BJ (cell line): ENCODE measurements at regions of chr18 and their contacts with region 1.

Region 1: DNA sequence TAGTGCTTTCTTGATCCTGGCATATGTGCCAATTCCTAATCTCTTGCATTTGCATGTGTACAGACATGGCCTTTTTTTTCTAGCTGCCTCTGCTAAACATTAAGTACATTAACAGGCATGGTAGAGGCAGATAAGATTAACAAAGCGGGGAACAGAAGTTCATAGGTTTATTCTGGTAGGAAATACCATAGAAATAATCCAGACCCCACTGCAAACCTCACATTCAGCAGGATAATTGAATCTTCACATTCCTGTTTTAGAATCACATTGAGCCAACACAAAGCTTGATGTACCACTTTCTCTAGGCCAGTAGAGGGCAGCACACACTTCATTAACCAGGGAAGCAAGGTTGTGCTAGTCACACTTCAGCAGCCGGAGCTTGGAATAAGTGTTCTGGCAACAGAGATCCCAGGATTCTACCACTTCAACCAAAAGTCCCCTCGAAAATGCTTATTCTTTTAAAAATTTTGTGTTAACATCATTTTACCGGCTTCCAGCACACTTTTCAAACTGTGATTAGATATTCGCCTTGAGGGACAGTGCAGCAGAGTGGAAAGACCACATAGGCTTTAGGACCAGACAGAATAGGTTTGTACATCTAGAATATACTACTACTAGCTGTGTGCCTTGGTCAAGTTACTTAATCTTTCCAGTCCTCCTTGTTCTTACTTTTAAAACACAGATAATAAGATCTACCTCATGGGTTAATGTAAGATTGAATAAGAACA is 420.2 kb upstream of the CHST9 start:
- DNase-seq: peak; percentile 4
- H3K4me3 ChIP-seq: no peak overlapping the region
- H3K27me3 ChIP-seq: no peaks in the 10 kb centered on the region
- CTCF ChIP-seq: peak; percentile 86

Region 2: DNA sequence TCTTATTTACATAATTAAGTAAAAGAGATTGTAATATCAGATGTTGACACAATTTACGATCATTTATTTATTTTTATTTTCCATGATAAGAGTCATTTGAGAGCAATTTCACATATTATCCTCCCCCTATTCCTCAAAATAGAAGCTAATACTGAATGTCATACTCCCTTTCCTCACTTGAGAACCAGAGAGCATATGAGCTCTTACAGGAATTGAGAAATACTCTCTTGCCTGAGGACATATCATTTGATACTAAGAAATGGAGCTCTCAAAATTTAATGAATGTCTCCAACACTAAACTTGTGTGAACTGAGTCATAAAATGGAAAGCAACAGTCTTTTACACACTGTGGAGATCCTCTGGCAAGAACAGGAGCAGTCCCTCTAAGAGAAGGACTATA is 351.7 kb before region 1 on chr18:
- CTCF ChIA-PET with region 1: no interaction called
- POLR2A ChIA-PET with region 1: no interaction called
- DNase-seq: no peak
- H3K4me3 ChIP-seq: no peak overlapping the region
- H3K27me3 ChIP-seq: no peaks in the 10 kb centered on the region
- CTCF ChIP-seq: no peak

Region 3: GRCh38 chr18:27428716-27429475 is 176.4 kb before region 1 on chr18:
- CTCF ChIA-PET with region 1: no interaction called
- POLR2A ChIA-PET with region 1: no interaction called
- DNase-seq: no peak
- H3K4me3 ChIP-seq: no peak overlapping the region
- H3K27me3 ChIP-seq: no peaks in the 10 kb centered on the region
- CTCF ChIP-seq: no peak

Region 4: GRCh38 chr18:27615345-27615844 is 10.1 kb after region 1 on chr18:
- CTCF ChIA-PET with region 1: interaction called, 16 read pairs
- POLR2A ChIA-PET with region 1: no interaction called
- DNase-seq: no peak
- H3K4me3 ChIP-seq: no peak overlapping the region
- H3K27me3 ChIP-seq: no peaks in the 10 kb centered on the region
- CTCF ChIP-seq: no peak

Region 5: DNA sequence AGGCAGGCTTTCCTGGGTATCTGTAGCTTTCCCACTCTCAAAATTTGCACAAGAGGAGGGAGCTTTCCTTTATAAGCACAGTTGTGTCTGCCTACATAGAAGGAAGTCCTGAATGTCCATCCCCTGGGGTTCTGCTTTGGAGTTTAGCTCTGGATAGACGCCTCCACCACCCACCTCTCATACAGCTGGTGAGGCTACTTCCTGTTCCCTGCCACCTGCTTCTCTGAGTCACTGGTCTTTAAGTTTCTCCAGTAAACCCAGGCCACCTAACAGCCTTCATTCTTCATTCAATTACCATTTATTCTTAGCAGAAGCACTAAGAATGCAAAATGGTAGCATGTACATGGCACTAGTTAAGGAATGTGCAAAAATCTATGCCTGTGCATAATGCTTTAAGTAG is 163.9 kb after region 1 on chr18:
- CTCF ChIA-PET with region 1: no interaction called
- POLR2A ChIA-PET with region 1: no interaction called
- DNase-seq: no peak
- H3K4me3 ChIP-seq: no peak overlapping the region
- H3K27me3 ChIP-seq: no peaks in the 10 kb centered on the region; the same call in 1 of the 2 replicates
- CTCF ChIP-seq: no peak